ENCODE measurements at regions of chr19 and their contacts with region 1.

Region 1: DNA sequence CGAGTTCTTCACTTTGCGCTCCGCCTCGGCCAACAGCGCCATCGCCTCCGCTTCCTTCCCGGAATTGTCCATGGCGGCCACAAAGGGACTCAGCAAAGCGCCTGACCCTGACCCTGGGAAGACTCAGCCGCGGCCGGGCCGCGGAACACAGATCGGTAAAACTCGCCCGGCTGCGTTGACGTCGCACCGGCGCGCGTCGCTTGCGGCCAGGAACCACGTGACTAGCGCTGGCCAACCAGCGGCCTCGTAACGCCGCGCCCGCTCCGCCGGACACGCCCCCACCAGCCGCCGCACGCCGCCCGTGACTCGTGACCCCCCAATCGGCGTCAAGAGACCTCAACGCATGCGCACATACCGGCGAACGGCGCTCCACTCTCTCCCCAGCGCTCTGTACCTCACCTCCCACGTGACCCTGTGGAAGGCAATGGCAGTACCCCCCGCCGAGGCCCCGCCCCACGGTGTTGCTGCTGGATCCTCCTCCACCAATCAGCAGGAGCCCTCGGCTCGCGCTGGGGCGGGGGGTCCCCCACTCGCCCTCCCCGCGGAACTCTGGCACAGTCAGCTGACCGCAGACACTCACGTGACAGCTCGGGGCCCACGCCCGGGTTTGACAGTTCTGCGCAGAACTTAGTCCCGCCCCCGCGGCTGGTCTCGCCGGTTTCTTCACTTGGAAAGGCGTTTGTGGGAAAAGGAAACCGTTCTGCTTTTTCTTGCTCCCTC is at the start of gene NAPA:
- DNase-seq: peak; percentile 100
- ATAC-seq: peak; percentile 87 to 96
- H3K4me3 ChIP-seq: peak within 1 kb of the TSS; percentile 89
- H3K27ac ChIP-seq: peak within 1 kb of the TSS; percentile 90 to 92
- H3K4me1 ChIP-seq: peaks cover 28% of the 10 kb centered on the region
- CTCF ChIP-seq: no peak
- EP300 ChIP-seq: no peak
- POLR2A ChIP-seq: peak; percentile 67
- RAD21 ChIP-seq: peak; percentile 64 to 79; a peak in 4 of 5 replicates
- polyA plus RNA-seq, gene NAPA: 69.6 and 74.3 TPM in 2 replicates

Region 2: GRCh38 chr19:47391510-47392223 is 123.4 kb before region 1 on chr19:
- CTCF ChIA-PET with region 1: no interaction called
- POLR2A ChIA-PET with region 1: no interaction called
- DNase-seq: peak; percentile 75 to 81
- ATAC-seq: peak; percentile 91 to 93
- H3K4me3 ChIP-seq: no peak overlapping the region
- H3K27ac ChIP-seq: peak overlapping the region in 1 of 2 experiments; percentile 42; a peak in 1 of 6 replicates
- H3K4me1 ChIP-seq: no peaks in the 10 kb centered on the region
- CTCF ChIP-seq: peak; percentile 98
- EP300 ChIP-seq: no peak
- POLR2A ChIP-seq: no peak
- RAD21 ChIP-seq: peak; percentile 89 to 91

Region 3: DNA sequence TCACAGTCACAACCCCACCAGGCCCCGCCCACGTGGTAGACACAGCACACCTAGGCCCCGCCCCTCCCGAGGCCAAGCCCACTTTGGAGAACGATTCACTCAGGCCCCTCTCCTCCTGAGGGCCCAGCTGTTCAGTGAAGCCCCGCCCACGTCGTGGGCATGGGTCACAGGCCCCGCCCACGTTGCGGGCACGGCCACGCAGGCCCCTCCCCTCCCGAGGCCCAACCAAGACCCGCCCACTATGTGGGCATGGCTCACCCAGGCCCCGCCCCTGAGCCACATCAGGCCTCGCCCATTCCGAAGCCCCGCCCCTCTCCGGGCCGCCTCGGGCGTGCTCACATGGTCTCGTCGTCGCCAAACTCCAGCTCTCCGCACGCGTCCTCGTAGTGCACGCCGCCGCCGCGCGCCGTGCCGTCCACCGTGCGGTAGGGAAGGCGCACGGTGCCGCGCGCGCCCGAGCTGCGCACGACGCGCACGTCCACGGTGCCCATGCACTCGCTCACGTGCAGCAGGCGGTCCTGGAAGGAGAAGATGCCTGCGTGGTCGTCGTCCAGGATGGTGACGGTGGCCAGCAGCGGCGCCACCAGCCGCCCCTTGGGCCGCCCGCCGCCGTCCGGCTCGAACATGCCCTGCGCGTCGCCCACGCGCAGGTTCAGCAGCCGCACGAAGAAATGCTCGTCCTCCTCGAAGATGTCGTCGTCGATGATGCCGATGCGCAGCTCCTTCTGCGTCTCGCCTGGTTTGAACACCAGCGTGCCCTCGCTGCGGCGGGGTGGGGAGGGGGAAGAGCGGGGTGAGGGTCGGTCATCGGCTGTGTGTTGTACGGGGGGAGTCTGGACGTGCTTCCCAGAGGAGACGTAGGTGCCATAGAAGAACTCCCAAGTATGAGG is 67.3 kb before region 1 on chr19:
- CTCF ChIA-PET with region 1: interaction called, 16 read pairs
- POLR2A ChIA-PET with region 1: no interaction called
- DNase-seq: peak; percentile 67 to 92
- ATAC-seq: peak; percentile 54 to 72
- H3K4me3 ChIP-seq: peak overlapping the region; percentile 50
- H3K27ac ChIP-seq: peak overlapping the region; percentile 46 to 51; a peak in 5 of 6 replicates
- H3K4me1 ChIP-seq: peaks cover 26% of the 10 kb centered on the region
- CTCF ChIP-seq: no peak
- EP300 ChIP-seq: no peak
- POLR2A ChIP-seq: no peak
- RAD21 ChIP-seq: no peak

Region 4: GRCh38 chr19:47499863-47500830 is 14.9 kb before region 1 on chr19:
- CTCF ChIA-PET with region 1: interaction called, 29 read pairs
- POLR2A ChIA-PET with region 1: no interaction called
- DNase-seq: no peak
- ATAC-seq: no peak
- H3K4me3 ChIP-seq: no peak overlapping the region
- H3K27ac ChIP-seq: no peak overlapping the region
- H3K4me1 ChIP-seq: no peaks in the 10 kb centered on the region
- CTCF ChIP-seq: no peak
- EP300 ChIP-seq: no peak
- POLR2A ChIP-seq: no peak
- RAD21 ChIP-seq: no peak

Region 5: DNA sequence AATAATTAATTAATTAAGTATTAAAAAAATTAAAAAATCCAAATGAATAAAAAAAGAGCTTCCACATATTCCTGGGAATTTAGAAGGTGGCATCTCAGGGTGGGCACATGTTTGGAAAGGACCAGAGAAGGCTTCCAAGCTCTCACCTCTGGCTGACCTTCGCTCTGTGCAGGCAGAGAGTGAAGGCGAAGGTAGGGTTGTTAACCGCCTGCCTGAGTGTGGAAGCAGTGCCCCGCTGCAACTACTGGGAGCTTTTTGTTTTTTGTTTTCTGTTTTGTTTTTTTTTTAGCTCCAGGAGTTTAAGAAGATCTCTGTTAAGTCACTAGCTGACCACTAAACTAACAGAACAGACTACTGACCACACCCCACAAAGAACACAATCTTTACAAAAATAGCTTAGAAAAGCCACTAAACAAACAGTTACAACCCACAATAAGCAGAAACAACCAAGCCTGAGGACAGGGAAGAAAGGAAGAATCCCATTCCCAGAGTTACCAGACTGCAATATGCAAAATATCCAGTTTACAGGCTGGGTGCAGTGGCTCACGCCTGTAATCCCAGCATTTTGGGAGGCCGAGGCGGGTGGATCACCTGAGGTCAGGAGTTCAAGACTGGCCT is 46.5 kb after region 1 on chr19:
- CTCF ChIA-PET with region 1: interaction called, 13 read pairs
- POLR2A ChIA-PET with region 1: no interaction called
- DNase-seq: peak in 1 of 2 experiments; percentile 66
- ATAC-seq: peak; percentile 30 to 77; a peak in 3 of 6 replicates
- H3K4me3 ChIP-seq: no peak overlapping the region
- H3K27ac ChIP-seq: no peak overlapping the region
- H3K4me1 ChIP-seq: peaks cover 9% of the 10 kb centered on the region; the same call in 2 of the 3 replicates
- CTCF ChIP-seq: no peak
- EP300 ChIP-seq: no peak
- POLR2A ChIP-seq: no peak
- RAD21 ChIP-seq: no peak

Region 6: DNA sequence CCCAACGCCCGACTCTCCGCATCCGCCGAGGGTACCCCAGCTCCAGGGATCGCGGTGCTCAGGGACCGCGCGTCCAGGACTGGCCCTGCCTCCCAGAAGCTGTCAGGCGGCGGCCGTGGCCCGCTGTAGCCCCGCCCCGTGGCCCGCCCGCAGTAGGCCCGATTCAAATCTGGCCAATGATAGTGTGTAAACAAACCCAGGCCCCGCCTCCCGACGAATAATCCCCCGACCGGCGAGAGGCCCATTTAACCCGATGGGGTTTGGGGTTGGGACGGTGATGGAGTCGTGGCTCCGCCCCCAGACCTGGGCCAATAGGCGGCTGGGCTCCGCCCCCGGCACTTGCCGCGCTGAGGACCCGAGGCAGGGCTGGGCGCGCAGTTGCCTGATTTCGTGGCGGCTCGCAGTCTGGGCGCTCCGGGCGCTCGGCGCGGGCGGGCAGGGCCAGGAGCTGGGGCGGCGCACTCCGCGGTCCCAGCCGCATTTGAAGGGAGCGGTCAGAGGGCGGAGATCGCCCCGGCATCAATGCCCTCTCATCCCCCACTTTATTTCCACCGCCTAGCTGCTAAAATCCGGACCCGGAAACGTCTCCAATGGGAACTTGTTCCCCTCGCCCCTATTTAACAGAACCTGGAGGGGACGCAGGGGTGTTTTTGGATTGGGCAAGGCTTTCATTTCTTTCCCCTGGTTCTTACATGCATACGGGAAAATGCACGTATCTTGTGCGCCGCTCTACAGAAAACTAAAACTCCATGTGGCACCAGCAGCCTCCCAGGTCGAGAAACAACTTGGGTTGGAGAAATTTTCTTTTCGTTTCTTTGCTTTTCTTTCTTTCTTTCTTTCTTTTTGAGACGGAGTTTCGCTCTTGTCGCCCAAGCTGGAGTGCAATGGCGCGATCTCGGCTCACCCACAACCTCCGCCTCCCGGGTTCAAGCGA is 85.5 kb after region 1 on chr19:
- CTCF ChIA-PET with region 1: interaction called, 40 read pairs
- POLR2A ChIA-PET with region 1: interaction called, 6 read pairs
- DNase-seq: peak; percentile 99 to 100
- ATAC-seq: peak; percentile 90 to 93
- H3K4me3 ChIP-seq: peak overlapping the region; percentile 64
- H3K27ac ChIP-seq: peak overlapping the region; percentile 82 to 89
- H3K4me1 ChIP-seq: peaks cover 19% of the 10 kb centered on the region
- CTCF ChIP-seq: no peak
- EP300 ChIP-seq: no peak
- POLR2A ChIP-seq: peak; percentile 93
- RAD21 ChIP-seq: peak in 1 of 2 experiments; percentile 22; a peak in 3 of 5 replicates

Measured in A549 (cell line).